ENCODE measurements at regions of chr18 and their contacts with region 1.

Region 1: DNA sequence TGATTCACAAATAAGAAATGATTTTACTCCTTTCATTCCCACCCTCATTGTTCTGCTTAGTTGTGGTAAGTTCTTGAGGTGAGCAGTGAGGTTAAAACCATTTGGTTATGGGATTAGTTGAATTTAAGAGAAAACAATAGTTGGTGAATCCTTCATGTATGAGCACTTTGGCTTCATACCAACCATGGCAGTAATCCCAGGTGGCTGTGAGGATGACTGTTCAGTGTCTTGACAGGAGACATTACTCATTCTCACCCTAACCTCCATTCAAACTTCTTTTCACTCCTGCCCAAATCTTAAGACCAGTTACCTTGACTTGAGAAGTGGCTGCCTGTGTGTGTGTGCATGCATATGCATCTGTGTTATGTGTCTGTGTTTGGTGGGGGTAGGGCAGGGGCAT is 143.1 kb downstream of the SETBP1 start:
- DNase-seq: no peak
- ATAC-seq: peak; percentile 38
- H3K4me3 Mint-ChIP-seq: no peak overlapping the region
- H3K27ac Mint-ChIP-seq: no peak overlapping the region
- H3K4me1 Mint-ChIP-seq: peaks cover 67% of the 10 kb centered on the region
- H3K27me3 Mint-ChIP-seq: no peaks in the 10 kb centered on the region
- CTCF ChIP-seq: no peak

Region 2: DNA sequence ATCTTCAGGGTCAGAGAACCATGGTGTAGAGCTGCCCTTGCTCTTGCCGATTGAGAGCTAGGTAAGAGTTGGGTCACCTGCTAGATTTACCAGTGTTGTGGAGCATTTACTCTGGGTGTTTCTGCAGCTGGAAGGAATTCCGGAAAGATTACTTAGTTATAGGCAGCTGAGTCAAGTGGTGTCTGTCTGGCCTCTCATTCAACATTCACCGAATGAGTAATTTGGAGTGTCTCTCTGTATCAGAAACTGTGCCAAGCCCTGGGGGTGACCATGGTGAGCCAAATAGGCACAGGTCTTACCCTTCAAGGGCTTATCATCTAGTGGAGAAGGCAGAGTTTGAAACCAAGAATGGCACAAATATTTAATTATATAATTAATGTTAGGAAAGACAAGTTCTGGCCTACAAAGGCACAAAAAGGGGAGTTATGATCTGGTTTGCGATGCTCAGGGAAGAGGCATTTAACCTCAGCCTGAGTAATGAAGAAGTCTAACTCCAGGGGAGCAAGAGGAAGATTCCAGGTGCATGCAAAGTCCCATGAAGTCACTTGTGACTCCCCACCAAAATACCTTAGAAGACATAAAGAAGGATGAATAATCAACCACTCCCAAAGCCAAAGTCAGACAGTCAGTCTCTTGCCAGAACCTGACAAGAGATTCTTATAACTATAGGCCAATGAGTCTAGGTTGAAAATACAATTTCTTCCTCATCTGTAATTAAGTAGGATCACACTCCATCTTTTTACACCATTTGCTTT is 130.6 kb before region 1 on chr18:
- CTCF ChIA-PET with region 1: no interaction called
- POLR2A ChIA-PET with region 1: no interaction called
- intact Hi-C with region 1: no loop called
- DNase-seq: no peak
- ATAC-seq: no peak
- H3K4me3 Mint-ChIP-seq: no peak overlapping the region
- H3K27ac Mint-ChIP-seq: peak overlapping the region; percentile 9
- H3K4me1 Mint-ChIP-seq: peaks cover 86% of the 10 kb centered on the region
- H3K27me3 Mint-ChIP-seq: no peaks in the 10 kb centered on the region
- CTCF ChIP-seq: no peak

Region 3: DNA sequence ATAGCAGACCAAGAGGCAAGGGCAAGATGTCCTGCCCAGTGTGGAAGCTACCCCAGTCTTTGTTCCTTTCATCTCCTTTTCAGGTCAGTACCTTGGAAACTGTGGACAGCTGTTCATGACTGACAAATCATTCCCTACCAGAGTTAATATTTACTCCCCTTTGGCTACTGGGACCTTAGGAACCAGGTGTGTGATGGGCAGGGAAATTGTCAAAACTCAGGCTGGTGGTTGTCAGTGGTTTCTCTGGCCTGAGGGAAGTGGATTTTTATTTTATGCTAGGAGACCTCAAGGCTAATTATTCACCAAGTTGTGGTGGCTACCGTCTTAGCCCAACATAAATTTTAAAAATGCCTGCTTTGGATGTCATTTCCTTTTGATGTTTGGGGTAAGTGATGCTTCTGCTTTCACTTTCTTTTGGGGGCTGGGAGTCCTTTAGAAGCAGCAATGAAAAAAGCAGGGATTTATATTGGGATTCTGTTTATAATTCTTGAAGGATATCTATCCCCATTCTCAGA is 23.8 kb before region 1 on chr18:
- CTCF ChIA-PET with region 1: no interaction called
- POLR2A ChIA-PET with region 1: no interaction called
- intact Hi-C with region 1: loop called (anchors 2 kb)
- DNase-seq: no peak
- ATAC-seq: peak; percentile 43
- H3K4me3 Mint-ChIP-seq: peak overlapping the region; percentile 61
- H3K27ac Mint-ChIP-seq: peak overlapping the region; percentile 86
- H3K4me1 Mint-ChIP-seq: peaks cover 94% of the 10 kb centered on the region
- H3K27me3 Mint-ChIP-seq: no peaks in the 10 kb centered on the region
- CTCF ChIP-seq: no peak

Region 4: DNA sequence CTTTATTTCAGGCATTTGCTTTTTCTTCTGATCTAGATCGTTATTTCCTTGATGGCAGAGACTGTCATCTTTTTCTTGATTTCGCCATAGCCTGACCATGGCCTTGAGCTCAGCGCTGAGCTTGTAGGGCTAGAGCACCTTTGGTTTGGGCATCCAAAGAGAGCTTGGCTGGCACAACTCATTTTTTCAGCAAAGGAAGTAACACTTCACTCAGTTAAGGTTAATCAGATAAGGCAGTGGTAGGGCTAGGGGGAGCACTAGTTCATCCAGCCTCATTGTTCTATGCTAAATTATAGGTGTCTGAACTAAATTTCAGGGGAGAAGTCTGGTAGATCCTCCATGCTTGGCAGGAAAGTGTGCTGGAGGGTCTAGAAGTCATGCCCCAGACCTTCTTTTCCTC is 18.1 kb before region 1 on chr18:
- CTCF ChIA-PET with region 1: interaction called, 4 read pairs
- POLR2A ChIA-PET with region 1: no interaction called
- intact Hi-C with region 1: loop called (anchors 2 kb)
- DNase-seq: no peak
- ATAC-seq: no peak
- H3K4me3 Mint-ChIP-seq: no peak overlapping the region
- H3K27ac Mint-ChIP-seq: peak overlapping the region; percentile 4
- H3K4me1 Mint-ChIP-seq: peaks cover 82% of the 10 kb centered on the region
- H3K27me3 Mint-ChIP-seq: no peaks in the 10 kb centered on the region
- CTCF ChIP-seq: no peak

Measured in activated B cell treated with CpG ODN at 0.5 μM for 24 hours (primary cell).